GM12878 (cell line): ENCODE measurements at regions of chr17 and their contacts with region 1.

Region 1: DNA sequence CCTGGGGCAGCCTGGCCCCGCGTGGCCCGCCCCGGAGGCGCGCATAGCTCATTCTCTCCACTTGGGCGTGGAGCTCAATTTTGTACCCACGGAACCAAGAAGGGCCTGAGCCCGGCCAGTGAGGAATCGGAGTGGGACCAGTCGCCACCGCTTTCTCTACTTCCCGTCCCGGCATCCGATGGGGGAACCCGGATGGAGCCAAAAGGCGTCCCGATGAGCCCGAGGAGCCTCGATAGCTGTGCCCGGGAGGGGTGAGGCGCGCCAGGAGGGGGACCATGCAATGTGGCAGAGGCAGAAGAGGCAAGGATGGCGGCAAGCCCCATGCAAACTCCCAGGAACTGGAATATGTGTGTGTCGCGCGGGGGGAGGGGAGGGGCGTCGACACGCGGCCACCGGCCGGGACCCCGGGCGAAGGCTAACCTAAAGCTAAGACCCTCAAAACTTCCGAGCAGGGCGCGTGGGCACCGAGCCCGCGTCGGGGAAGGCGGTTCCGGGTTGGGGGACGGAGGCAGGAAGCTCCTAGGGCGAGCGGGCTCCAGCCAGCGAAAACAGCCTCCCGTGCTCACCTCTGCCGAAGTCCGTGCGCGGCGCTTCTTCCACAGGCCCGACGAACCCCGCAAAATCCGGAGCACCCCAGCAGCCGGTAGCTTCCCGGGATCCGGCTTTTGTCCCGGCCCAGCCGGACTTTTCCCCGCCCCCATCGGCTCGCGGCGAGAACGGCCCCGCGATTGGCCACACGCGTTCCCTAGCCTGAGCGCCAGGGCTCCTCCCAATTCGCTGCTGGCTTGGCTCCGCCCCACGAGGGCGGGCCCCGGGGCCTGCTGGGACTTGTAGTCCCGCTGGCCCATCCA is at the start of gene ACLY:
- DNase-seq: no peak
- ATAC-seq: peak; percentile 98
- H3K4me3 ChIP-seq: peak within 1 kb of the TSS; percentile 98
- H3K27ac ChIP-seq: peak within 1 kb of the TSS; percentile 86
- H3K4me1 ChIP-seq: peaks cover 19% of the 10 kb centered on the region
- H3K27me3 ChIP-seq: no peaks in the 10 kb centered on the region
- CTCF ChIP-seq: 0 out of 6 replicates have a peak, but pooled peaks of 1 of the 3 experiments have one; percentile 9
- EP300 ChIP-seq: no peak
- POLR2A ChIP-seq: peak; percentile 87
- RAD21 ChIP-seq: no peak
- polyA plus RNA-seq, gene ACLY: 32.6 to 39.6 TPM

Region 2: GRCh38 chr17:41959336-41960095 is 41.0 kb after region 1 on chr17:
- CTCF ChIA-PET with region 1: interaction called, 6 read pairs
- POLR2A ChIA-PET with region 1: no interaction called
- RAD21 ChIA-PET with region 1: interaction called, 11 read pairs
- SMC1A ChIA-PET with region 1: interaction called, 3 read pairs
- in situ Hi-C with region 1: no loop called
- intact Hi-C with region 1: no loop called
- DNase-seq: no peak
- ATAC-seq: peak; percentile 85
- H3K4me3 ChIP-seq: no peak overlapping the region
- H3K27ac ChIP-seq: no peak overlapping the region
- H3K4me1 ChIP-seq: no peaks in the 10 kb centered on the region
- H3K27me3 ChIP-seq: no peaks in the 10 kb centered on the region
- CTCF ChIP-seq: peak; percentile 32 to 48 (median 47); a peak in 4 of 6 replicates
- EP300 ChIP-seq: no peak
- POLR2A ChIP-seq: no peak
- RAD21 ChIP-seq: peak; percentile 50